ENCODE measurements at regions of chr5 and their contacts with region 1.

Region 1: DNA sequence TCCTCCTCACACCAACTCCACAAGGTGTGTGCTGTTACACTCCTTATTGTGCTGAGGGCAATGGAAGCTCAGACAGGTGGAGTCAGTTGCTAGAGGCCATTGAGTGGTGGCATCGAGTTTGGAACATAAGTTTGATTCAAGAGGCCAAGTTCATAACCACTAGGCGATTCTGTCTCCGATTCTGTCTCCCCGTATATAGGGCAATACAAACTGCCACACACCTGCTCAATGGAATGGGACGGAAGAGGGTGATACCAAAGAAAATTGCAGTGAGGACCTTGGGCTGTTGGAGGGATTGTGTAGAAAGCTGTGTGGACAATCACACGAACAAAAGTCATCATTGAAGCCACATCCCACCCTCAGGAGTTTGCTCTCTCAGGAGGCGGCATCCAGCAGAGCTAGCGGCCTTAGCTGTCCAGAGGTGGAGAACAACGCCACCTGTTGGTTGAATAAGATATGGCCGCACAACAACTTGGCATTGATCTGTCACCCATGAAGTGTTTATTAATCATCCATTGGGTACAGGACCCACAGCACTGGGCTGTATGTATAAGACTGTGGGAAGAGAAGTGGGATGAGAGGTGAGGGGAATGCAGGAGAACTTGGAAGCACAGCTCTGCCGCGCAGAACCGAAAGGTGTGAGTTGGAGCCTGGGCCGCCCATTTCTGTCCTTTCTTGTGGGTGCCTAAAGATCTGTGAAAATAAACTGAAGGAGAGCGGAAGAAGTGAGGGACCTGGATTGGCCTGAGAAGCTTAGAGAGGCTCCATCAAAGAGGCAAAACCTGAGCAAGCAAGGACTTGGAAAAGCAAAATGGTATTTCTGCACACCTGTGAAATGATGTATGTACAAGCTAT is 16.1 kb upstream of the NEUROG1 start:
- DNase-seq: peak; percentile 83

Region 2: GRCh38 chr5:135466178-135467050 is 85.4 kb before region 1 on chr5:
- intact Hi-C with region 1: loop called (anchors 2 to 5 kb)
- DNase-seq: peak; percentile 94

Region 3: DNA sequence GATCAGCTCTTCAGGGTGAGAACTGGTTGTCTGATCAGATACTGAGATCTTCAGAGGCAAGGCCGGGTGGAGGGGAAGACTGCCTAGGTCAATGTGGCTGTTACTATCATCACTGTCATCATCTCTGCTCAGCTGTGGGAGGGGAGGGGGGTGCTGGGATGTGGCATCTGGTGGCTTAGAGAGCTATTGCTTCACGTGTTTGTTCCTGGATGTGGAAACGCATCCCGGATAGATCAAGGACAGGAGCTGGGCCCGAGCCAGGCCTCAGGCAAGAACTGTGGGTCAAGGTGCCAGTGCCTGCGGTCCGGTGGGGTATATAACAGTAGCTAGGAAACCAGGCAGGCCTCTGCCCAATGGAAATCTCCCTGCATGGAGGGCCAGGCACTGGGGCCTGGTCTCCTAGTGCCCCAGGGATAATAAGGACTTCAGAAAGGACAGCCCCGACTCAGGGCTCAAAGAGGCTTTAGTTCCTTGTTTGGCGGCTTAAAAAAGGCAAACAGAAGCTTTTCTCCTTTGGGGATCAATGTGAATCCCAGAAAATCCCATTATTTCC is 69.4 kb before region 1 on chr5:
- intact Hi-C with region 1: no loop called
- DNase-seq: no peak

Region 4: GRCh38 chr5:135718151-135718550 is 166.3 kb after region 1 on chr5:
- intact Hi-C with region 1: no loop called
- DNase-seq: no peak